ENCODE measurements at regions of chr17 and their contacts with region 1.

Region 1: DNA sequence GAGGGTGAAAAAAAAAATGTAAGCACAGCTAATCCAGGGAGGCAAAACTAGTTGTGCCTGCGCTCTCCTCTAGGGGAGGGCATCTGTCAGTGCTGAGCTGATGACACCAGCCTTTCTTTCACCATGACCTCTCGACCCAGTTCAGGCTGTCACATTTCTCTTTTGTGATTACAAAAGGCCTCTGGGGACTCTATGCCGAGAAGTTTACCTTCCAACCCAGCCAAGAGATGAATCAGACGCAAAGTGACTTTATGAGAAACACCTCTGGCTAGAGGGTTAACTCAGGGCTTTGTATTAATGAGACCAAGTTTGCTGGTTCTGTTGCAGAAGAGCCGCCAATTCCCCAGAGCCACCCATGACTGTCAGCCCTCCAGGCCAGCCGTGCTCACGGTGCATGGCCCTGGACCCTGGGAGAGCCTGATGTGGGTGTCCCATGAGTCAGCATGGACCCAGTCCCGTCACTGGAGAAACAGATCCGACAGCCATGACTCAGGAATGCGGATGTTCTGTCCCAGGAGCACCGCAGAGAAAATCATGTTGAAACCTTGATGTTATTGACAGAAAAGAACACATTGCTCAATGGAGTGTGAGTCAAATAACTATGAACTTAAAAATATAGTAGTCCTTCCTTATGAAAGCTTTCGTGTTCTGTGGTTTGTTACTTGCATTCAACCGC is 437.2 kb downstream of the HS3ST3B1 start:
- DNase-seq: peak; percentile 87
- H3K4me3 Mint-ChIP-seq: no peak overlapping the region
- H3K27ac Mint-ChIP-seq: peak overlapping the region; percentile 44
- H3K4me1 Mint-ChIP-seq: peaks cover 12% of the 10 kb centered on the region
- H3K27me3 Mint-ChIP-seq: no peaks in the 10 kb centered on the region
- CTCF ChIP-seq: no peak

Region 2: GRCh38 chr17:14672830-14673229 is 65.3 kb before region 1 on chr17:
- CTCF ChIA-PET with region 1: no interaction called
- intact Hi-C with region 1: loop called (anchors 2 kb)
- DNase-seq: peak; percentile 45
- H3K4me3 Mint-ChIP-seq: no peak overlapping the region
- H3K27ac Mint-ChIP-seq: no peak overlapping the region
- H3K4me1 Mint-ChIP-seq: peaks cover 17% of the 10 kb centered on the region
- H3K27me3 Mint-ChIP-seq: no peaks in the 10 kb centered on the region
- CTCF ChIP-seq: no peak

Region 3: GRCh38 chr17:14699574-14700180 is 38.4 kb before region 1 on chr17:
- CTCF ChIA-PET with region 1: no interaction called
- intact Hi-C with region 1: loop called (anchors 1 kb)
- DNase-seq: peak; percentile 7
- H3K4me3 Mint-ChIP-seq: no peak overlapping the region
- H3K27ac Mint-ChIP-seq: peak overlapping the region; percentile 9
- H3K4me1 Mint-ChIP-seq: no peaks in the 10 kb centered on the region
- H3K27me3 Mint-ChIP-seq: no peaks in the 10 kb centered on the region
- CTCF ChIP-seq: no peak

Measured in Calu3 (cell line).